Stomach (tissue), 19 donors: ENCODE measurements at regions of chr6 and their contacts with region 1.

Region 1: GRCh38 chr6:11064836-11065235 is 20.7 kb upstream of the ELOVL2 start:
- DNase-seq: peak in 1 of 2 donors; percentile 22
- H3K4me3 ChIP-seq: no peak overlapping the region
- H3K27ac ChIP-seq: no peak overlapping the region
- H3K4me1 ChIP-seq: peaks cover 0 to 4% (median 0%) of the 10 kb centered on the region in 4 donors
- H3K27me3 ChIP-seq: no peaks in the 10 kb centered on the region
- CTCF ChIP-seq: no peak
- EP300 ChIP-seq: no peak
- POLR2A ChIP-seq: no peak

Region 2: DNA sequence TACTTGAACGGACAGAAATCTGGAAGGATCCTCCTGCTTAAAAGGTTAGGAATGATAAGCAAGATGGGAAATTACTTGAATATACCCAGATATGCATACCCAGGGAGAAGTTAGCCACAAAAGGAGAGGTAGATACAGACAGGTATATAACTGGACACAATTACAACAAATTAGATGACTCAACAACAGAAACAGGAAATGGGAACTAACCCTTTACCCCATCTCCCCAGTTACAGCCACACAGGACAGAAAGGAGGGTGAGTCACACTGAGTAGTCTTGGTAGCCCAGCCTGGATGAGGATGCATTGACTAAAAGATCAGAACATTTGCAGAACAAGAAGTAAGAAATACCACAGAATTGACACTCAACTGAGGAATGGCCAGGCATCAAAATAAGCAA is 431.6 kb before region 1 on chr6:
- intact Hi-C with region 1: no loop called
- DNase-seq: no peak
- H3K4me3 ChIP-seq: no peak overlapping the region
- H3K27ac ChIP-seq: no peak overlapping the region
- H3K4me1 ChIP-seq: peaks cover 0 to 10% (median 0%) of the 10 kb centered on the region in 4 donors
- H3K27me3 ChIP-seq: no peaks in the 10 kb centered on the region
- CTCF ChIP-seq: no peak
- EP300 ChIP-seq: no peak
- POLR2A ChIP-seq: no peak

Region 3: DNA sequence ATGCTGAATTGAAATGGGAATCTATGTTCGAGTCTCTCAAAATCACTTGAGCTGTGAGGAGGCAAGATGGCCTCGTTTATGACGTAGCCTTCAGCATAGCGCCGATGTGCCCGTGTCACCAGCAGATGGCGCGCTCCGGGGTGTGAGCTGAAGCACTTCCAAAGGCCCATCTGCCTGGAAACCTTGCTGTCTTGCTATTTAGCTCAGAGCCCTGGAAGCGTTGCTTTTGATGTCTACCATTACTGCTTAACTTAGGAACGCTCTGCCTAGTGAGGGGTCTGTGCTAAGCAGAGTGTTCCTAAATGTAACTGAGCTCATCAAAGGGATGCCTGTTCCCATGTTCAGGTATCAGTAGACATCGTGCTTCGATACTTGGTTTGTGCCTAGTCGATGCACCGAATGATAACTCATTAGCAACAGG is 110.2 kb before region 1 on chr6:
- intact Hi-C with region 1: loop called (anchors 5 kb)
- DNase-seq: peak; percentile 75 to 85
- H3K4me3 ChIP-seq: no peak overlapping the region
- H3K27ac ChIP-seq: no peak overlapping the region
- H3K4me1 ChIP-seq: peaks cover 0 to 3% (median 0%) of the 10 kb centered on the region in 4 donors
- H3K27me3 ChIP-seq: no peaks in the 10 kb centered on the region
- CTCF ChIP-seq: peak in 5 of 7 experiments; percentile 46 to 65 (median 56)
- EP300 ChIP-seq: no peak
- POLR2A ChIP-seq: no peak

Region 4: GRCh38 chr6:10991115-10991514 is 73.7 kb before region 1 on chr6:
- intact Hi-C with region 1: no loop called
- DNase-seq: no peak
- H3K4me3 ChIP-seq: no peak overlapping the region
- H3K27ac ChIP-seq: no peak overlapping the region
- H3K4me1 ChIP-seq: no peaks in the 10 kb centered on the region
- H3K27me3 ChIP-seq: no peaks in the 10 kb centered on the region
- CTCF ChIP-seq: no peak
- EP300 ChIP-seq: no peak
- POLR2A ChIP-seq: no peak